A673 (cell line): ENCODE measurements at regions of chr6 and their contacts with region 1.

Region 1: DNA sequence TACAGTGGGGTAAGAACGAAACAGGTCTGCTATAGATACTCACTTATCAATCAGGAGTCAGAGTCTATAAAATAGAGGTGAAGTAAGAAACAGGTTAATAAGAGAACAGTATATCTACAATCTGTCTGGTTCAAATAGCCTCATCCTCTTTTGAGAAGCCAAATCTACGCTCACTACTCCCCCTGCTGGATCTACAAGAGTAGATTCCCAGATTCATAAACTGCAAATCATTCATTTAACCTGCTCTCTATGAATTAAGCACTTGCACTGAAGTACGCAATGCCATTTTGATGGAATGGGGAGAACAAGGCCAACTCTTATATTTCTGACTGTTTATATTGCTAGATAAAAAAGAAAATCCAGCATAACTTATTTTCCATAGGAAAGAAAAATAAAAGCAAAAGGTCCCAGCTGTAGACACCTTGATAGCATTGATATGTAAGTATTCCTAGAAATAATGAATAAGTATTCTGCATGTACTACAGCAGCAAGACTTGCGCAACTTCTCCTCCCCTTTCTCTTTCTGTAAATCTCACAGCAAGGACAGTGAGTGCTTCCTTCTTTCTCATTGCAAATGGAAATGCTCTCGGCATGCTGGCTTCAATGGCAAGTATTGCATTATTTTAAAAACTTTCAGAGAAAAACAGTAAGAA is 92.3 kb downstream of the RFX6 start:
- DNase-seq: peak; percentile 65
- H3K4me3 ChIP-seq: no peak overlapping the region
- H3K27ac ChIP-seq: no peak overlapping the region
- H3K4me1 ChIP-seq: no peaks in the 10 kb centered on the region
- H3K27me3 ChIP-seq: peaks cover 38% of the 10 kb centered on the region
- CTCF ChIP-seq: peak; percentile 71

Region 2: GRCh38 chr6:116217069-116217468 is 752.3 kb before region 1 on chr6:
- CTCF ChIA-PET with region 1: no interaction called
- POLR2A ChIA-PET with region 1: no interaction called
- intact Hi-C with region 1: loop called (anchors 5 kb)
- DNase-seq: peak; percentile 64
- H3K4me3 ChIP-seq: no peak overlapping the region
- H3K27ac ChIP-seq: peak overlapping the region; percentile 37
- H3K4me1 ChIP-seq: peaks cover 16% of the 10 kb centered on the region
- H3K27me3 ChIP-seq: no peaks in the 10 kb centered on the region
- CTCF ChIP-seq: peak; percentile 73

Region 3: GRCh38 chr6:116779573-116780164 is 189.7 kb before region 1 on chr6:
- CTCF ChIA-PET with region 1: no interaction called
- POLR2A ChIA-PET with region 1: no interaction called
- intact Hi-C with region 1: loop called (anchors 2 kb)
- DNase-seq: peak; percentile 66
- H3K4me3 ChIP-seq: peak overlapping the region; percentile 5
- H3K27ac ChIP-seq: no peak overlapping the region
- H3K4me1 ChIP-seq: no peaks in the 10 kb centered on the region
- H3K27me3 ChIP-seq: no peaks in the 10 kb centered on the region
- CTCF ChIP-seq: peak; percentile 71

Region 4: DNA sequence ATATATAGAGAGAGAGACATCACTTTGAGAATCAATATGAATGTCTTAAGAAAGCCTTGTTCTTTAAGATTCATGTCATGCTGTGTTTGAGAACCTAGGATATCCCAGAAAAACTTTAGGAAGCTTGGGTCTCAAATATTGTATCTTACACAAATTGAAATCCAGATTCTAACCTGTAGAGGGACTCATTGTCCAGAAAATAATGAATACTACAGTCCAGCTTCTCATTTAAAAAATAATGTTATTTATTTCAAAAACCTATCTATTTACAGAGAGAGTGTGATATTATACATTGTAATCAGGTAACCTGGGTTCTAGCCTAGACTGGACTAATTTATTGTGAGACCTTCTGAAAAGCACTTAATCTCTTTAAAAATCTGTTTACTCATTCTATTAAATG is 88.1 kb before region 1 on chr6:
- CTCF ChIA-PET with region 1: no interaction called
- POLR2A ChIA-PET with region 1: no interaction called
- intact Hi-C with region 1: loop called (anchors 5 kb)
- DNase-seq: no peak
- H3K4me3 ChIP-seq: no peak overlapping the region
- H3K27ac ChIP-seq: no peak overlapping the region
- H3K4me1 ChIP-seq: no peaks in the 10 kb centered on the region
- H3K27me3 ChIP-seq: peaks cover 58% of the 10 kb centered on the region
- CTCF ChIP-seq: no peak; the same call in 1 of the 2 replicates

Region 5: DNA sequence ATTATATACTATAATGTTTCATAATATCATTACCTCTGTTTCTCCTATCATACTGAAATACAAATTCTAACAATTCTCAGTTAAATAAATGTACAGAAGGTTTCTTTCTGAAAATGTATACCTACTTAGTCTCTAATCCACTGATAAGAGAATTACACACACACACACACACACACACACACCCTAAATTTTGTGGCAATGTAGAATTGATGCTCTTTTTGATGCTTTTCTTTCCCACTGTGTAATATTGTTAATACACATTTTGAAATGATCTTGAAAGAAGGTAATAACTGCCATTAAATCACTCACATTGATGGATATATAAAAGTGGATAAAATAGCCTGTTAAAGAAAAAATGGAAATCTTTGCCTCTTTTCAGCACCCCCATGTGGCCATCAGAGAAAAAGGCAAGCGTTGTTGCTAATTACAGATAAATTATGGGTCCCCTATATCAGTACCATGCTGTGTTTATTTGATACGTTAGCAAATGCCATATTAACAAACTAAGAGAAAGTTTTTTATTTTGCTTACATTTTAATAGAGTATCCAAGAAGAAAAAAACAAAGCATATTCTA is 219.4 kb after region 1 on chr6:
- CTCF ChIA-PET with region 1: no interaction called
- POLR2A ChIA-PET with region 1: no interaction called
- intact Hi-C with region 1: loop called (anchors 2 kb)
- DNase-seq: peak; percentile 8
- H3K4me3 ChIP-seq: no peak overlapping the region
- H3K27ac ChIP-seq: no peak overlapping the region
- H3K4me1 ChIP-seq: no peaks in the 10 kb centered on the region
- H3K27me3 ChIP-seq: no peaks in the 10 kb centered on the region
- CTCF ChIP-seq: peak; percentile 63

Region 6: DNA sequence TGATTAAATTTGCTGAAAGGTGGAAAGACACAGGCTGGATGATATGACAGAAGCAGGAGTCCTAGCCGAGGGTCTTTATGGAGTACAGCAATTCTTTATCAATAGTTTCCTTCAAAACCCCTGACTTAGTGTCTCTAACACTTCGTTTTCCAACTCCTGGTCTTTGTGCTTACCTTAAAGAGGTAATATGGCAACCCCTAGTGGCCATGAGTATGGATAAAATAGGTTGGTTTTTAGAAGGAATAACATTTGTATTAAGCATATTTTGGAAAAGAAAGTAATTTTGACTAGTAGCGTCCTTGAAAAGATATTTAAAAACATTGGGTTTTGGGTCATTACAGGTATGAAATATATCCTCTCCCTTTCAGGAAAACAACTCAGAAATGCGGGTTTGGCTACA is 347.9 kb after region 1 on chr6:
- CTCF ChIA-PET with region 1: no interaction called
- POLR2A ChIA-PET with region 1: no interaction called
- intact Hi-C with region 1: loop called (anchors 2 kb)
- DNase-seq: peak; percentile 17
- H3K4me3 ChIP-seq: no peak overlapping the region
- H3K27ac ChIP-seq: no peak overlapping the region
- H3K4me1 ChIP-seq: no peaks in the 10 kb centered on the region
- H3K27me3 ChIP-seq: peaks cover 3% of the 10 kb centered on the region
- CTCF ChIP-seq: peak; percentile 47

Region 7: GRCh38 chr6:117829594-117830319 is 860.4 kb after region 1 on chr6:
- CTCF ChIA-PET with region 1: no interaction called
- POLR2A ChIA-PET with region 1: no interaction called
- intact Hi-C with region 1: loop called (anchors 10 kb)
- DNase-seq: peak; percentile 71
- H3K4me3 ChIP-seq: peak overlapping the region; percentile 35
- H3K27ac ChIP-seq: no peak overlapping the region
- H3K4me1 ChIP-seq: no peaks in the 10 kb centered on the region
- H3K27me3 ChIP-seq: no peaks in the 10 kb centered on the region
- CTCF ChIP-seq: peak; percentile 74